Dorsolateral prefrontal cortex (tissue), 120 donors: ENCODE measurements at regions of chr6 and their contacts with region 1.

Region 1: GRCh38 chr6:37018198-37019064 is 13.0 kb downstream of the FGD2 start:
- DNase-seq: peak; percentile 85 to 98 (median 93)
- H3K4me3 ChIP-seq: peak overlapping the region in 15 of 59 donors; percentile 6 to 42 (median 21)
- H3K27ac ChIP-seq: peak overlapping the region; percentile 10 to 92 (median 82)
- H3K27me3 ChIP-seq: no peaks in the 10 kb centered on the region
- CTCF ChIP-seq: peak; percentile 46 to 95 (median 82)

Region 2: GRCh38 chr6:36765594-36766398 is 252.6 kb before region 1 on chr6:
- intact Hi-C with region 1: loop called (anchors 2 to 10 kb)
- DNase-seq: peak; percentile 72 to 94 (median 84)
- H3K4me3 ChIP-seq: peak overlapping the region in 6 of 59 donors; percentile 13 to 33 (median 24)
- H3K27ac ChIP-seq: peak overlapping the region in 53 of 59 donors; percentile 2 to 84 (median 56)
- H3K27me3 ChIP-seq: no peaks in the 10 kb centered on the region
- CTCF ChIP-seq: peak; percentile 46 to 97 (median 88)

Region 3: GRCh38 chr6:36979347-36979742 is 39.1 kb before region 1 on chr6:
- intact Hi-C with region 1: loop called (anchors 2 to 5 kb)
- DNase-seq: peak; percentile 49 to 84 (median 79)
- H3K4me3 ChIP-seq: no peak overlapping the region
- H3K27ac ChIP-seq: peak overlapping the region in 58 of 59 donors; percentile 23 to 100 (median 84)
- H3K27me3 ChIP-seq: no peaks in the 10 kb centered on the region
- CTCF ChIP-seq: peak; percentile 28 to 85 (median 72)

Region 4: DNA sequence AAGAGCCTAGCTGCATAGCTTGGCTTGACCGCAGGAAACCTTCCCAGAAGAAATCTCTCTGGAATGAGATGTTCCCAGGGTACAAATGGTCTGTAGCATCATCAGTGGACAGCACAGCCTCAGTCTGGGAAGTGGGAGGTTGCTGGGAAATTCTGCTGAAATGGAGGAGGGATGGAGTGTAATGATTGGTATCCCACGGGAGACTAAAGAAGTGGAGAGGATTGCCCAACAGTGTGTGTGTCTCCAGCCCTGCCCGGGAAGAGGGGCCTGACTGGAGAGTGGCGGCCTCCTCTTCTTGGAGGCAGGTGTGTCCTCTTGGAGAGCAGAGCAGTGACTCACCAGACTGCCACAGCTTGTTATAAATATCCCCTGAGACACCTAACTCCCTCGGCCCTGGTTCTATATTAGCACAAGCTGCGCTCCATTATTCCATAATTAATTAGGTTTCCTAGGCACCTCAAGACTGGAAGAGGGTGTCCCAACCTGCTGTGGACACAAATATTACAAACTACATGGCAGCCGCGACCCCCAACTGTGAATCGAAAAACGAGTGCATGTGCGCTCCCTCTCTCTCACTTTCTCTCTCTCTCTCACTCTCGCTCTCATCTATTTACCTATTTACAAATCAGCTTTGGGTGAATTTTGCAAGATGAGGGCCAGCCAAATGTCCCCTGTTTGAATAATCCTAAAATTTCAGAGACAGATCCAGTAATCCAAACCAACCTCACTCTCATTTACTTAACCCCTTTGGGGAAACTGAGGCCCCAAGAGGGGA is 55.8 kb after region 1 on chr6:
- intact Hi-C with region 1: no loop called
- DNase-seq: no peak
- H3K4me3 ChIP-seq: no peak overlapping the region
- H3K27ac ChIP-seq: no peak overlapping the region
- H3K27me3 ChIP-seq: no peaks in the 10 kb centered on the region
- CTCF ChIP-seq: no peak

Region 5: GRCh38 chr6:37169496-37170272 is 151.3 kb after region 1 on chr6 and contains the start of gene PIM1:
- intact Hi-C with region 1: loop called in 1 of 2 experiments (anchors 1 kb)
- DNase-seq: peak; percentile 96 to 100 (median 99)
- H3K4me3 ChIP-seq: peak within 1 kb of the TSS; percentile 68 to 98 (median 90)
- H3K27ac ChIP-seq: peak within 1 kb of the TSS; percentile 55 to 98 (median 92)
- H3K27me3 ChIP-seq: no peaks in the 10 kb centered on the region
- CTCF ChIP-seq: peak in 10 of 56 donors; percentile 2 to 42 (median 16)
- total RNA-seq, gene PIM1: 8.8 to 61.4 (median 18.1) TPM